ENCODE measurements at regions of chr5 and their contacts with region 1.

Region 1: DNA sequence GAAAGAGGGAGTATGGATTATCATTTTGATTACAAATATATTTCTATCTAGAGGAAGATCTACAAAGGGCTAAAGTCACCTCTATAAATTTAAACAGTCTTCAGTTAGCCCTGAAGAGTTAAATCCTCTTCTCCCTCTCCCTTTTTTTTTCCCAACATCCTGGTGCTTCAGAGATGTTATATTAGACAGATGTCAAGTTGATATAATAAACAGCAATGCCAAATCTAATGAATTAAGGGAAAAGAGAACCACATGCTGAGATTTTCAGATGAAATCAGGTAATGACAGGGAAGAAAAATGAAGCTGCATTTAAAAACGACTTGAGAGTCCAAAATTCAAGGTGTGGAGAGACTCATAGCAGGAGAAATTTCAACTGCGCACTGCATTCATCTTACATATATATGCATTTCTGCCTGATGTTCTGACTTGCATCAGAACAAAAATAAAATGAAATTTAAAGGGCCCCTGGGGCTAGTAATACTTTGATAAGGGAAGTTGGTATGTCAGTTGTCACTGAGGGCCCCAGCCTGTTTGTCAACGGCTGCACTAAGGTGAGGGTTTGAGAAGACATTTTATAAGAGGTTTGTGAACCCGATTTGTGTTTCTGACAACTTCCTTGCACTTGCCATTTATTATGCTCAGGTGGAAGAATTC is 338.9 kb upstream of the PANK3 start:
- DNase-seq: no peak
- ATAC-seq: no peak
- H3K4me3 Mint-ChIP-seq: no peak overlapping the region
- H3K27ac Mint-ChIP-seq: no peak overlapping the region
- H3K4me1 Mint-ChIP-seq: no peaks in the 10 kb centered on the region
- H3K27me3 Mint-ChIP-seq: peaks cover 37% of the 10 kb centered on the region
- CTCF ChIP-seq: no peak

Region 2: DNA sequence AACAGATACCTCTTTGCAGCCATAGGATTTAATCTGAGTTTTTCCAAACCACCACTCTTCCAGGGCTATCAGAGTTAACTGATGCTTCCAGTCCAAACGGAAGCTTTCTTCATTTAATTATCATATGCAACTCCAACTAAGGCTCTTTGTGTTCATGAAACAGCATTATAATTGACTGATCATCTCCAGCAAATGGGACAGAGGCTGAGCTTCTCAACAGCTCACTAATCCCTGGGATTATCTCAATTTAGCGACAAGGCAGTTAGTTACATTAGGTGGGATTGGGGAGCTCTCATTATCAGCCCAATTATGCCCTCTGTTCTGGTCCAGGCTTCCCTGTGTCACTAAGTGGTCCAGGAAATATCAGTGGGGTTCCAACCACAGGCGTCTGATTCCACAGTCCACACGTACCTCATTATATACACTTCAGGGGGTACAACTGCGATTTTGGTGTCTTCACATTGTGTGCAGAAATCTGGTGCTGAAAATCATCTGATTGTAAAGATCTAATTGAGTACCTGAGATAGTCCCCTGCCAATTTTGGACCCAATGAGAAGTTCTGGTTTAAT is 25.4 kb before region 1 on chr5:
- CTCF ChIA-PET with region 1: no interaction called
- POLR2A ChIA-PET with region 1: no interaction called
- intact Hi-C with region 1: loop called (anchors 1 kb)
- DNase-seq: no peak
- ATAC-seq: no peak
- H3K4me3 Mint-ChIP-seq: no peak overlapping the region
- H3K27ac Mint-ChIP-seq: no peak overlapping the region
- H3K4me1 Mint-ChIP-seq: no peaks in the 10 kb centered on the region
- H3K27me3 Mint-ChIP-seq: peaks cover 12% of the 10 kb centered on the region
- CTCF ChIP-seq: no peak